ENCODE measurements at regions of chr2 and their contacts with region 1.

Region 1: DNA sequence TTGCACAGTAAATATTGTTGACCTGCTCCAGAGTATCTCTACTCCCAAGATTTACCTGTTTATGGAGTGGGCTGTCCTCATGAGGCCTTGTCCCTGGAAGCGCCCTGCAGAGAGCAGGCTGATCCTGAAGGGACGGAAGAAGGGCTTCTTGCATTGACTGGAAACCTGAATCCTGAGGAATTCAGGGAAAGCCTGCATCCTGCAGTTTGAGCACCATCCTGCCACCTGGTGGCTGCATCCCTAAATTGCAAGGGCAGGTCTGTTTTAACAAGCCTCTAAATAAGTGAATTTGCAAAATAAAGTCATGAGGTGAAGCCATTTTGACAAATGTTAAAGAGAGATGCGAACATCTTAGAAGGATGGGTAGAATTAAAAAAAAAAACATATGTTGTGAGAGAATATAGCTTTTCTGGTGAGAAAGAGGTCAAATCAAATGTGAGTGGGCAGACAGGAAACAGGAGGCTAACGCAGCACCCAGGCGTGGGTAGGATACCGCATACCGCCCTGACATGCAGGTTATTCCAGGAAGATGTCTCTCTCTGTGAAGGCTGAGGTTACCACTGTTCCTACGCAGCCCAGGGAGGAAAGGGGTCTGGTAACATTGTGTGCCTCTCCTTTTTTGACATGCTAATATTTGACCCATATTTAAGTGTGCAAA is 754.9 kb downstream of the RNF144A start:
- DNase-seq: peak; percentile 66
- H3K4me3 Mint-ChIP-seq: peak overlapping the region; percentile 15
- H3K27ac Mint-ChIP-seq: peak overlapping the region; percentile 83
- H3K4me1 Mint-ChIP-seq: peaks cover 39% of the 10 kb centered on the region
- H3K27me3 Mint-ChIP-seq: no peaks in the 10 kb centered on the region

Region 2: GRCh38 chr2:7427293-7428060 is 244.7 kb before region 1 on chr2:
- CTCF ChIA-PET with region 1: interaction called, 31 read pairs
- POLR2A ChIA-PET with region 1: interaction called, 7 read pairs
- DNase-seq: no peak
- H3K4me3 Mint-ChIP-seq: peak overlapping the region; percentile 35
- H3K27ac Mint-ChIP-seq: peak overlapping the region; percentile 59
- H3K4me1 Mint-ChIP-seq: peaks cover 43% of the 10 kb centered on the region
- H3K27me3 Mint-ChIP-seq: peaks cover 5% of the 10 kb centered on the region

Region 3: DNA sequence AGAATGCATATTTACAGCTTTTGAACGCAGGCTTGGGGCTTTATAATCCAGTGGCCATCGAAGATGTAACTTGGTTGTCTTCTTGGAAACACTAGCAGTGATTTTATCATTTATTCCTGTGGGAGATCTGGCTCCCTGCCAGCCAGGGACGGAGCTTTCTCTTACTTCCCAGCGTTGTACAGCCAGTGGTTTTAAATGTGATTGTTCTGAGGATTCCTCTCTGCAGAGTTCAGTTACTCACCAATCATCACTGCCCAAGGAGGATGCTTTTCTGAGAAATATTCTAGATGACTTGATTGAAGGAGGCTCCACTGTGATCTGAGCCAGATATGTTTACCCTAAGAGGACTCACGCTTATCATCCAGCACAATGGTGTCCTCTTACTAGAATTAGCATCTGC is 10.7 kb before region 1 on chr2:
- CTCF ChIA-PET with region 1: interaction called, 13 read pairs
- POLR2A ChIA-PET with region 1: interaction called, 5 read pairs
- DNase-seq: no peak
- H3K4me3 Mint-ChIP-seq: no peak overlapping the region
- H3K27ac Mint-ChIP-seq: peak overlapping the region; percentile 53
- H3K4me1 Mint-ChIP-seq: peaks cover 15% of the 10 kb centered on the region
- H3K27me3 Mint-ChIP-seq: no peaks in the 10 kb centered on the region